ENCODE measurements at regions of chr11 and their contacts with region 1.

Region 1: GRCh38 chr11:128157423-128158298 is 429.7 kb downstream of the ETS1 start:
- DNase-seq: no peak
- ATAC-seq: peak; percentile 48 to 85 (median 70)
- H3K4me3 ChIP-seq: no peak overlapping the region
- H3K27ac ChIP-seq: no peak overlapping the region
- H3K4me1 ChIP-seq: no peaks in the 10 kb centered on the region
- H3K27me3 ChIP-seq: peaks cover 0 to 2% (median 0%) of the 10 kb centered on the region in 3 donors
- CTCF ChIP-seq: peak; percentile 67

Region 2: GRCh38 chr11:128116885-128117284 is 40.8 kb before region 1 on chr11:
- intact Hi-C with region 1: no loop called
- DNase-seq: no peak
- ATAC-seq: no peak
- H3K4me3 ChIP-seq: no peak overlapping the region
- H3K27ac ChIP-seq: no peak overlapping the region
- H3K4me1 ChIP-seq: no peaks in the 10 kb centered on the region
- H3K27me3 ChIP-seq: no peaks in the 10 kb centered on the region
- CTCF ChIP-seq: no peak

Region 3: GRCh38 chr11:128831174-128832120 is 673.8 kb after region 1 on chr11:
- intact Hi-C with region 1: loop called (anchors 5 kb)
- DNase-seq: peak; percentile 78 to 87
- ATAC-seq: peak; percentile 76 to 92 (median 82)
- H3K4me3 ChIP-seq: no peak overlapping the region
- H3K27ac ChIP-seq: no peak overlapping the region
- H3K4me1 ChIP-seq: no peaks in the 10 kb centered on the region
- H3K27me3 ChIP-seq: no peaks in the 10 kb centered on the region
- CTCF ChIP-seq: peak; percentile 88

Region 4: DNA sequence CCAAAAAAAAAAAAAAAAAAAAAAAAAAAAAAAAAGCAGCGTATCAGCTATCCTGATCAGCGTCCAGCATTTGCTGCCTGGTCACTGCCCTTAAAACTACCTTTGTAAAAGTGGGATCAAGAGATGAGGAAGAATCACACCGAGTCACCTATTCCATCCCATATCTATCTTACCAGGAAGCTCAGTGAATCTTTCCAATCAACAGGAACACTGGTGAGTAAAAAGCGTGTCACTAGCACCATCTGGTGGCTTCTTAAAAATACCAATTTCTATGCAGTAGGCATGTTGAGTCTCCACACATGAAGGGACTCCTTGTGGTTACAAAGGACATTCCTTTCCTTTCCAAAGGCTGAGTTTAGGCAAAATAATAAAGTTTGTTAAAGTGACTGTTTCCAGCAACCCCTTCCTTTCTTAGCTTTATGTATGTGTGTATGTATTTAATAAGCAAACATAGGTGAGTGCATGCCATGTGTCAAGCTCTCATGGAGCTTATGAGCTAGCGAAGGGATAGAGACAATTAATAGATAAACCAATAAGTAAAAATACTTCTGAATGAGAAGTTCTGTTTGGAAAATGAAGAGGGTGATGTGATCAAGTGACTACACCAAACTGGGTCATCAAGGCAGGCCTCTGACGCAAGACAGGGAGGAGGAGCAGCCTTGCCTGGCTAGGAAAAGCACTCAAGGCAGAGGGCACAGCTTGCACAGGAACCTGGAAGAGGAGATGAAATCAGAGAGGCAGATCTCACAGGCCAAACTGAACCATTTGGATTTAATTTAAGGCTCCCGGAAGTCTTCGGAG is 798.9 kb after region 1 on chr11:
- intact Hi-C with region 1: loop called in 1 of 2 experiments (anchors 5 kb)
- DNase-seq: no peak
- ATAC-seq: peak; percentile 73 to 88 (median 75)
- H3K4me3 ChIP-seq: no peak overlapping the region
- H3K27ac ChIP-seq: no peak overlapping the region
- H3K4me1 ChIP-seq: no peaks in the 10 kb centered on the region
- H3K27me3 ChIP-seq: peaks cover 0 to 3% (median 0%) of the 10 kb centered on the region in 3 donors
- CTCF ChIP-seq: peak; percentile 73

Measured in psoas muscle (tissue), 8 donors.